Gastrocnemius medialis (tissue), 4 donors: ENCODE measurements at regions of chr19 and their contacts with region 1.

Region 1: GRCh38 chr19:12847159-12848139 is 9.1 kb downstream of the MAST1 start:
- DNase-seq: peak; percentile 57 to 78
- ATAC-seq: peak; percentile 90 to 93
- H3K4me3 ChIP-seq: peak overlapping the region in 3 of 4 donors; percentile 23 to 39 (median 24)
- H3K27ac ChIP-seq: peak overlapping the region in 1 of 4 donors; percentile 28
- H3K4me1 ChIP-seq: peaks cover 5 to 6% of the 10 kb centered on the region in 2 donors
- H3K27me3 ChIP-seq: peaks cover 19 to 22% (median 19%) of the 10 kb centered on the region in 3 donors
- CTCF ChIP-seq: peak; percentile 95 to 99 (median 98)
- POLR2A ChIP-seq: no peak

Region 2: GRCh38 chr19:12733369-12734176 is 113.9 kb before region 1 on chr19:
- in situ Hi-C with region 1: no loop called
- intact Hi-C with region 1: no loop called
- DNase-seq: no peak
- ATAC-seq: no peak
- H3K4me3 ChIP-seq: peak overlapping the region; percentile 94 to 100 (median 96)
- H3K27ac ChIP-seq: peak overlapping the region; percentile 89 to 99 (median 98)
- H3K4me1 ChIP-seq: peaks cover 30 to 42% of the 10 kb centered on the region in 2 donors
- H3K27me3 ChIP-seq: no peaks in the 10 kb centered on the region
- CTCF ChIP-seq: peak in 1 of 5 experiments; percentile 17
- POLR2A ChIP-seq: no peak

Region 3: DNA sequence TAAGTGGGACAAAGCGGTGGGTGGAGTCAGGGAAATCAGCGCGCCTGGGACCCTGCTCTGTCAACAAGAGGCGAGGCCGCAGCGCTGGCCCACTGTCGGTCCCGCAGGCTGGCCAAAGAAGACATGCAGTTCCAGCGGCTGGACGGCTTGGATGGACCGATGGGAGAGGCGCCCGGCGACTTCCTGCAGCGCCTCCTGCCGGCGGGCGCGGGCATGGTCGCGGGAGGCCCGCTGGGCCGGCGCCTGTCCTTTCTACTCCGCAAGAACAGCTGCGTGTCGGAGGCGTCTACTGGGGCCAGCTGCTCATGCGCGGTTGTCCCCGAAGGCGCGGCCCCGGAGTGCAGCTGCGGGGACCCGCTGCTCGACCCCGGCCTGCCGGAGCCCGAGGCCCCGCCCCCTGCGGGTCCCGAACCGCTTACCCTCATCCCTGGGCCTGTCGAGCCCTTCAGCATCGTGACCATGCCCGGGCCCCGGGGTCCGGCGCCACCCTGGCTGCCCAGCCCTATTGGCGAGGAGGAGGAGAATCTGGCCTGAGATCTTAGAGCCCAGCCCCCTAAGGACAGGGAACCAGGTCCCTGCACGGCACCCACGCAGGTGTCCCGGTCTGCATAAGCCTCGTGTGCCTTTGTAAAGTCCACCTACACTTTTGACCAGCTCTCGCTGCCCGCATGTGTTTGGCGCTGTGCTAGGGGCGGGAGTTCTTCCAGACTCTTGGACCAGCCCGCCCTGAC is 89.7 kb before region 1 on chr19:
- in situ Hi-C with region 1: loop called in 3 of 4 experiments (anchors 5 to 10 kb)
- intact Hi-C with region 1: loop called (anchors 1 kb)
- DNase-seq: peak in 1 of 2 donors; percentile 70
- ATAC-seq: peak; percentile 60 to 83
- H3K4me3 ChIP-seq: peak overlapping the region; percentile 24 to 53 (median 46)
- H3K27ac ChIP-seq: peak overlapping the region in 3 of 4 donors; percentile 11 to 58 (median 57)
- H3K4me1 ChIP-seq: peaks cover 8% of the 10 kb centered on the region in 2 donors
- H3K27me3 ChIP-seq: peaks cover 0 to 4% (median 0%) of the 10 kb centered on the region in 3 donors
- CTCF ChIP-seq: peak; percentile 78 to 92 (median 83)
- POLR2A ChIP-seq: no peak

Region 4: GRCh38 chr19:12806239-12807081 is 41.0 kb before region 1 on chr19 and contains the start of gene RNASEH2A:
- in situ Hi-C with region 1: no loop called
- intact Hi-C with region 1: loop called (anchors 2 kb)
- DNase-seq: peak; percentile 79 to 84
- ATAC-seq: peak; percentile 72 to 73
- H3K4me3 ChIP-seq: peak within 1 kb of the TSS; percentile 68 to 75 (median 70)
- H3K27ac ChIP-seq: peak within 1 kb of the TSS; percentile 63 to 79 (median 74)
- H3K4me1 ChIP-seq: peaks cover 15 to 16% of the 10 kb centered on the region in 2 donors
- H3K27me3 ChIP-seq: no peaks in the 10 kb centered on the region
- CTCF ChIP-seq: peak in 2 of 5 experiments; percentile 24 to 25
- POLR2A ChIP-seq: no peak
- total RNA-seq, gene RNASEH2A: 1.0 to 3.9 (median 2.4) TPM